BJ (cell line): ENCODE measurements at regions of chr18 and their contacts with region 1.

Region 1: DNA sequence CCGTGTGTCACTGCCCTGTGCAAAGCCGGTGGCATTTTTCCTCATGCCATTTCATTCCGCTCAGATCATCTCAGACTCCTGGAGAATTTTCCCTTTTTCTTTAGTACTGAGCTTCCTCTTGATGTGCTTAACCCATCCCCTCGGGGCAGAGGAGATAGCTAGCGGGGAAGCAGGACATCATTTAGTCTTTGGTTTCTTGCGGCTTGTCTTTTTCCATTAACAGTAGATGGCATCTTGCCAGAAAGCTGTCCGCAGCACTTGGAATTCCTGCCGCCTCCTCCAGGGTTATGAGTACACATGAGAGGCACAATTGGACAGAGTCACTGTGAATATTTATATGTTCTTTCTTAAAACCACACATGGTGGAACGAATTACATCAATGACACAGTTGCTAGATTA is 226.6 kb downstream of the ALPK2 start:
- DNase-seq: no peak
- H3K4me3 ChIP-seq: no peak overlapping the region
- H3K27me3 ChIP-seq: no peaks in the 10 kb centered on the region
- CTCF ChIP-seq: no peak

Region 2: DNA sequence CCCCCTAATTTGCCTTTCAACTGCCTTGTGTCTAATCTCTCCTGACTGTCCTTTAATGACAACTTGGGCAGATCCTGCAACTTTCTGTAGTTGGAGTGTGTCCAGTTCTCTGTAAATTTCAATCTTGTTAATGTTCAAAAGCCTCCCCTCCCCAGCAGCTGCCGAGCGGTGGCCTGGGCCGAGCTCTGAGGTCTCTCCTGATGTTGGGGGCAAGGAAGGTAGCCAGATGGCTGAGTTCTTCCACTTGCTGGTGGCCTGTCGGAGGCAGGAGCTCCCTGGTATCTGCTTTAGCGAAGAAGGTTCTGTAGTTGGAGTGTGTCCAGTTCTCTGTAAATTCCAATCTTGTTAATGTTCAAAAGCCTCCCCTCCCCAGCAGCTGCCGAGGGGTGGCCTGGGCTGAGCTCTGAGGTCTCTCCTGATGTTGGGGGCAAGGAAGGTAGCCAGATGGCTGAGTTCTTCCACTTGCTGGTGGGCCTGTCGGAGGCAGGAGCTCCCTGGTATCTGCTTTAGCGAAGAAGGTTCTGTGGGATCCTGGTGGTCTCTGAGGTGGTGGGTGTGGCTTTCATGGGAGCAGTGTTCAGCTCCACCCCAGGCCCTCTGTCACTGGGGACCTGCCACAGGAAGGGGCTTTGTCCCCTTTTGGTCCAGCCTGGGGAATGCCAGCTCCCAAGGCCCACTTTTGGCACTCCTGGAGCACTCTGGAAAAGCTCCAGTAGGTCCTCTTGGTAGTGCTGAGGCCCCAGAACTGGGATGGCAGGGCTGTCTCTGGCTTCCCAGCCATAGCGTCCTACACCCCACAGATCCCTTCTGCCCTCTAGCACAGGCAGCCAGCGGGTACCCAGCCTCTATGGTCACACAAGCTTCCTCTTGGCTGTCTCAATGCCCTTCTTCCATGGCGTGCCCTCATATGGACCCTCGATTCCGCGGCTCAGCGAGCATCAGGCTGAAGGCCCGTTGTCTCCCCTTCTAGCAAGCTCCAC is 14.7 kb after region 1 on chr18:
- CTCF ChIA-PET with region 1: no interaction called
- POLR2A ChIA-PET with region 1: no interaction called
- DNase-seq: no peak
- H3K4me3 ChIP-seq: no peak overlapping the region
- H3K27me3 ChIP-seq: peaks cover 9% of the 10 kb centered on the region
- CTCF ChIP-seq: no peak

Region 3: DNA sequence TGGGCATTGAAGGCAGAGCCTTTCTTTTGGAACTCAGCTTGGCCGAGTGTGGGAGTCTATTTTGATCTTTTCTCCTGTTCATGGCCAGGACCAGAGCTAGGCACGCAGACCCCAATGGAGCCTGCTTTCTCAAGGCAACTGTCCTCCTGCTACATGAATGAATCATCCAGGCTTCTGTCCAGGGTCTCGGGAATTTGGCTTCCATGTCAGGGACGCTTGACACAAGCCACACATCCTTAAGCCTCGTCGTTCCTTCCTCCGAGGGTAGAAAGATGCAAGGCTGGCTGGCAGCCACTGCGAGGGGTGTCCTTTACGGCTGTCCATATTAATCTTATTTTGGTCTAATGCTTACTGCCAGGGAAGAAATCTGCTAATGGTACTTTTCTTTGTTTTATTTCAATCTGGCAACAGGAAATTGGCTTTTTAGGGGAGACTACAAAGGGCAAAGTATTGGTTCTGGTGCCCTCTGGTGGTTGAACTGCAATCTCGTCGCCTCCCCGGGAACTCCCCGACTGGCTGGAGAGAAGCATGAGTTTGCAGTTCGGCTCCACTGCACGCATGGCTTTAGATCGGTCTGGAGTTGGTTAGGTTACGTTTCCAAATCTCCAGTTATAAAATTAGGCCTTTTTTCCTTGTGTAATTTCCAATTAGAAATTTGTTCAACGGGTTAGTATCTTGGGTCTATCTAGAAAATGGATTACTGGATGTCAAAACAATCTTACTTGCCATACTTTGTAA is 91.4 kb after region 1 on chr18:
- CTCF ChIA-PET with region 1: interaction called, 12 read pairs
- POLR2A ChIA-PET with region 1: no interaction called
- DNase-seq: peak; percentile 25
- H3K4me3 ChIP-seq: no peak overlapping the region
- H3K27me3 ChIP-seq: no peaks in the 10 kb centered on the region
- CTCF ChIP-seq: peak; percentile 85